Naive thymus-derived CD4-positive, alpha-beta T cell (primary cell): ENCODE measurements at regions of chr12 and their contacts with region 1.

Region 1: DNA sequence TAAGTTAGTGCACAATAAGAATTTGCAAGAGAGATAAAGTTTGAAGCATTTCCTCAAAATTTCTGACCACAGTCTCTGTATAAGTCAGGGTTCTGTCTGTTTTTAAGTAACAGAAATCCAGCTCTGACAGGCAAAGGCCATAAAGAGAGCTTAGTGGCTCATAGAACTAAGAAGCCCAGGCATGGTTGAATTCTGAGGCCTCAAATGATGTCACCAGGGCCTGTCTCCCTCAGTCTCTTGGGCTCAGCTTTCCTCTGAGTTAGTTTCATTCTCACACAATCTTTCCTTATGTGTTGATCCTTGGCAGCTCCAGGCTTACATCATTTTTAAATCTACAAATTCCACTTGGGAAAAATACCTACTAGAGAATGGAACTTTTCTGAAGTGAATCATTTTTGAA is 173.4 kb upstream of the ATP2B1 start:
- DNase-seq: no peak
- ATAC-seq: peak; percentile 31
- H3K4me3 ChIP-seq: no peak overlapping the region
- H3K4me3 Mint-ChIP-seq: peak overlapping the region in 7 of 10 donors; percentile 30 to 83 (median 75)
- H3K27ac ChIP-seq: peak overlapping the region; percentile 28
- H3K27ac Mint-ChIP-seq: peak overlapping the region; percentile 82 to 95 (median 91)
- H3K4me1 ChIP-seq: peaks cover 31 to 36% of the 10 kb centered on the region in 2 donors
- H3K4me1 Mint-ChIP-seq: peaks cover 23 to 62% (median 57%) of the 10 kb centered on the region in 7 donors
- H3K27me3 ChIP-seq: no peaks in the 10 kb centered on the region
- H3K27me3 Mint-ChIP-seq: peaks cover 0 to 3% (median 0%) of the 10 kb centered on the region in 5 donors

Region 2: GRCh38 chr12:89756585-89757321 is 125.3 kb before region 1 on chr12:
- CTCF ChIA-PET with region 1: no interaction called
- POLR2A ChIA-PET with region 1: no interaction called
- intact Hi-C with region 1: loop called in 1 of 2 experiments (anchors 5 kb)
- DNase-seq: peak in 3 of 9 donors; percentile 11 to 31 (median 12)
- ATAC-seq: peak; percentile 86
- H3K4me3 ChIP-seq: no peak overlapping the region
- H3K4me3 Mint-ChIP-seq: peak overlapping the region in 1 of 10 donors; percentile 1
- H3K27ac ChIP-seq: no peak overlapping the region
- H3K27ac Mint-ChIP-seq: peak overlapping the region in 4 of 9 donors; percentile 6 to 75 (median 42)
- H3K4me1 ChIP-seq: peaks cover 4 to 28% of the 10 kb centered on the region in 2 donors
- H3K4me1 Mint-ChIP-seq: peaks cover 14 to 28% (median 25%) of the 10 kb centered on the region in 7 donors
- H3K27me3 ChIP-seq: no peaks in the 10 kb centered on the region
- H3K27me3 Mint-ChIP-seq: no peaks in the 10 kb centered on the region

Region 3: DNA sequence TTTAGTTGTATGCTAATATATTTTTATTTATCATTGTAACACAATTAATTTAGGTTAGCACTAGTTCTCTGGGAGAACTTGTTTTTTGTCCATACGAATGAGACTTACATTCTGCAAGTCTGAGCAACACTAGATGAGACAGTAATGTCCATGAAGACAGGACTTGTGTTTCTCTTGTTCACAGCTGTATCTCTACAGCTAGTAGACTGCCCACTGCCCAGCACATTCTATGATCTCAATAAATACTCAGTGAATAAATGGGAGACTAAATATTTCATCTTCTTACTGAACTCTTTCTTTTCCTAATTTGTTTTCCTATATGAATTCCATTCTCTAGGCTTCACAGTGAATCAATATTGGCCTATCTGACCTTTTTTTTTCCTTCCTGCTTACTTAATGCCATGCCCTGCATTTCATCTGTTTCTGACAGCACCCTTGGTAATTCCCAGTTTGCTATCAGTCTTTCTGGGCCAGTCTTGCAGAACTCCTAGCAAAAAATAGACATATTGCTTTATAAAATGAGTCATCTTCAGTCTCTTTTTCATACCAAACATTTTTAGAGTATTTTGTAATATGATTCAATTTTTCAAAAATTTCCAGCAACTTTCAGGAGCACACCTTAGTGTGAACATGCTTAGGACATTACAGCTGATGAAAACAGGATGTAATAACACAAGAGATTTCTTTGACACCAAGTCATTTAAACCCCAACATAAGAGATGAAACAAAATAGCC is 12.1 kb after region 1 on chr12:
- CTCF ChIA-PET with region 1: no interaction called
- POLR2A ChIA-PET with region 1: no interaction called
- intact Hi-C with region 1: loop called in 1 of 2 experiments (anchors 1 kb)
- DNase-seq: no peak
- ATAC-seq: no peak
- H3K4me3 ChIP-seq: no peak overlapping the region
- H3K4me3 Mint-ChIP-seq: no peak overlapping the region
- H3K27ac ChIP-seq: no peak overlapping the region
- H3K27ac Mint-ChIP-seq: peak overlapping the region in 3 of 9 donors; percentile 11 to 66 (median 32)
- H3K4me1 ChIP-seq: peaks cover 0 to 5% of the 10 kb centered on the region in 2 donors
- H3K4me1 Mint-ChIP-seq: peaks cover 3 to 38% (median 25%) of the 10 kb centered on the region in 7 donors
- H3K27me3 ChIP-seq: no peaks in the 10 kb centered on the region
- H3K27me3 Mint-ChIP-seq: no peaks in the 10 kb centered on the region